Adrenal gland (tissue), 19 donors: ENCODE measurements at regions of chr20 and their contacts with region 1.

Region 1: GRCh38 chr20:36519944-36520343 is 21.4 kb upstream of the MYL9 start:
- DNase-seq: no peak
- H3K4me3 ChIP-seq: no peak overlapping the region
- H3K27ac ChIP-seq: peak overlapping the region; percentile 20 to 78 (median 59)
- H3K4me1 ChIP-seq: peaks cover 10 to 30% of the 10 kb centered on the region in 2 donors
- H3K27me3 ChIP-seq: no peaks in the 10 kb centered on the region
- CTCF ChIP-seq: no peak
- POLR2A ChIP-seq: no peak

Region 2: DNA sequence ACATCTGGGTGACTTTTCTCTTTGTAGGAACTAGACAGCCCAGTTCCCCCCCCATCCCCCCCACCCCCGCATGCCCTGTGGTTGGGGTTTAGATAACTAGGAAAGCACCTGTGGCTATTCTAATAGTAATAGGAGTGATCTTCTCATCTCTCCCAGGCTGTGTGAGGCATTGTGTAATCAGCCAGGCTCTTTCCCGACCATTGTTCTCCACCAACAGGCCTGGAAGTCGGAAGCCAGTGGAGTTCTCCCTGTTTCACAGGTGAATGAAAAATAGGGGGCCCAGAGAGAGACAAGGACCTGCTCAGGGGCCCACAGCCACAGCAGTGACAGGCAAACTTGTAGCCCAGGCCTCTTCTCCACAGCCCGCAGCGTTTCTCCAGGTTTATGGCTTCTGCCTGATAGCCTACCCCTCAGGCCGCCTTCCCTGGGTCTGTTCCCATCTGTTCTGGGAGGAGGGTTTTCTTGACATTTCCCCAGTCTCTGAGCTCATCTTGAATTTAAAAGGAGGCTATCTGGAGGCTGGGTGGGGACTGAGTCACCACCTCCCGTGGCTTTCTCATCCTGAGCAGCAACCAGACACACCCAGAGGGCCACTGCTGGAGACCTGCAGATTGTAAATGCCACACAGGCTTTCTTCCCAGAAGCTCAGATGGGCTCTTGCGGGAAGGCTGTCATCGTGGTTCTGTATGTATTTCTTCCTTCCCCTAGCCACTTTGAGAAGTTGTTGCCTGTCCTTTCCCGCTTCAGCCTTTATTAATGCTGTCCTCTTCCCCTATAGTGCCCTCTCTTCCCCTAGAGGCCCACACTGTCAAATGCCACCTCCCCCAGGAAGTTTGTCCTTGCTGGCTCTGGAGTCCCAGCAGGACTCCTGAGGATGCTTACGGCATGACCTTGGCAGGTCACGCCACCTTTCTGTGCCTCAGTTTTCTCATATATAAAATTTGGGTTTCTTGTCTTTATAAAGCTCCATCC is 54.5 kb before region 1 on chr20:
- intact Hi-C with region 1: loop called in 1 of 2 experiments (anchors 5 kb)
- DNase-seq: peak in 6 of 7 donors; percentile 60 to 80 (median 74)
- H3K4me3 ChIP-seq: no peak overlapping the region
- H3K27ac ChIP-seq: peak overlapping the region in 4 of 5 donors; percentile 13 to 92 (median 68)
- H3K4me1 ChIP-seq: peaks cover 45 to 79% of the 10 kb centered on the region in 2 donors
- H3K27me3 ChIP-seq: no peaks in the 10 kb centered on the region
- CTCF ChIP-seq: no peak
- POLR2A ChIP-seq: peak in 1 of 2 donors; percentile 62

Region 3: GRCh38 chr20:36562724-36563123 is 42.8 kb after region 1 on chr20:
- intact Hi-C with region 1: no loop called
- DNase-seq: no peak
- H3K4me3 ChIP-seq: no peak overlapping the region
- H3K27ac ChIP-seq: no peak overlapping the region
- H3K4me1 ChIP-seq: no peaks in the 10 kb centered on the region
- H3K27me3 ChIP-seq: no peaks in the 10 kb centered on the region
- CTCF ChIP-seq: no peak
- POLR2A ChIP-seq: no peak